ENCODE measurements at regions of chr10 and their contacts with region 1.

Region 1: DNA sequence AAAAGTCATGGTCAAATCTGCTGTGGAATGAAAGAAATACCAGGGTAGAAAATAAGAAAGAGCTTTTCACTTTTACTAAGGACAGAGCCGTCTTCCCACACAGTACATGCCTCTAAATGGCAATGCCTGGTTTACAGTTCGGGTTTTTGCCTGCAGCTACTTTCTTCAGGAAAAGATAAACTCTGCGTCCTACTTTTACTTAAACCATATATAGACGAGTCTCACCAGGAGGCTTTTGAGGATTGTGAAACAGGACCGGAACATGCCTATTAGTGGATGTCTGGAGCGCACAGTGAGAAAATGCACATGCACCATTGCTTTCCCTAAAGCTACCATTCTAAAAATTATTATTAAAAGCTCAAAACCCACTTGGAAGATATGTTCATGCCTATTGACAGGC is 70.5 kb downstream of the KLF6 start:
- DNase-seq: no peak
- ATAC-seq: no peak
- H3K4me3 ChIP-seq: no peak overlapping the region
- H3K27ac ChIP-seq: no peak overlapping the region
- H3K4me1 ChIP-seq: no peaks in the 10 kb centered on the region
- H3K27me3 ChIP-seq: peaks cover 2 to 33% of the 10 kb centered on the region in 2 experiments; a peak in 3 of 5 replicates
- CTCF ChIP-seq: no peak
- EP300 ChIP-seq: no peak
- POLR2A ChIP-seq: no peak
- RAD21 ChIP-seq: no peak

Region 2: GRCh38 chr10:3482200-3483138 is 232.1 kb before region 1 on chr10:
- CTCF ChIA-PET with region 1: no interaction called
- POLR2A ChIA-PET with region 1: no interaction called
- in situ Hi-C with region 1: no loop called
- intact Hi-C with region 1: no loop called
- DNase-seq: peak; percentile 30
- ATAC-seq: peak; percentile 48
- H3K4me3 ChIP-seq: no peak overlapping the region
- H3K27ac ChIP-seq: no peak overlapping the region
- H3K4me1 ChIP-seq: no peaks in the 10 kb centered on the region
- H3K27me3 ChIP-seq: peaks cover 4 to 48% of the 10 kb centered on the region in 2 experiments; a peak in 4 of 5 replicates
- CTCF ChIP-seq: no peak
- EP300 ChIP-seq: no peak
- POLR2A ChIP-seq: no peak
- RAD21 ChIP-seq: no peak

Region 3: GRCh38 chr10:3729397-3729976 is 15.0 kb after region 1 on chr10:
- CTCF ChIA-PET with region 1: no interaction called
- POLR2A ChIA-PET with region 1: no interaction called
- in situ Hi-C with region 1: no loop called
- intact Hi-C with region 1: no loop called
- DNase-seq: no peak
- ATAC-seq: no peak
- H3K4me3 ChIP-seq: no peak overlapping the region
- H3K27ac ChIP-seq: no peak overlapping the region
- H3K4me1 ChIP-seq: 0 out of 2 replicates have a peak, but pooled peaks cover 4% of the 10 kb centered on the region
- H3K27me3 ChIP-seq: peaks cover 0 to 10% of the 10 kb centered on the region in 2 experiments; a peak in 1 of 5 replicates
- CTCF ChIP-seq: no peak
- EP300 ChIP-seq: no peak
- POLR2A ChIP-seq: no peak
- RAD21 ChIP-seq: no peak

Region 4: DNA sequence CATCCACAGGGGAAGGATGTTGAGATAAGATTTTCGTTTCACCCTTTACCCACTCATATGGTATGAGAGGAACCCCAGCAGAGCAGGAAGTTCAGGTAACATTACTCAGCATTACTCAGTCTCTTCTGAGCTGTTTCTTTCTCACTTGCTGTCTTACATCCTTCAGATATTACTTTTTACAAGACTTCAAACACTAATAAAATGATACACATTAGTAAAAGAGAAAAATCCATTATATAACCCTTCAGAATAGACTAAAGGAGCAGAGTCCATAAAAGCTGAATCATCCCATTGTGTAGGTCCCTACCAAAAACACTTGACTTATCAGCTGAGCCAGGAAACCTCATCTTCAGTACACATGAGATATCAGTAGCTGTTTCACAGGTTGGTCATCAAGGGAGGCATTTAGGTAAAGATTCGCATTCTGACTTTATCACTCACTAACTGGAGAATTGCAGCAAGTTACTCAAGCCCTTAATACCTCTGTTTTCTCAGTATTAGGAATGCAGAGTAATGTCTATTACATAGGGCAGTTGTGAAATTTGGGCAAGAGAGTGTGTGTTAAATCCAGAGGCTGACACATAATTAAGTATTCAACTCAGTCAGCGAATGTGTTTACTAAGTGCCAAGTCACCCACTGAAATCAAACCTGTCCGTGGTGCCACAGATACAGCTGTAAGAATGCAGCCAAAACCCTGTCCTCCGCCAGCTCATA is 25.8 kb after region 1 on chr10:
- CTCF ChIA-PET with region 1: no interaction called
- POLR2A ChIA-PET with region 1: no interaction called
- in situ Hi-C with region 1: no loop called
- intact Hi-C with region 1: no loop called
- DNase-seq: peak; percentile 98
- ATAC-seq: peak; percentile 97
- H3K4me3 ChIP-seq: no peak overlapping the region
- H3K27ac ChIP-seq: peak overlapping the region; percentile 67
- H3K4me1 ChIP-seq: peaks cover 65% of the 10 kb centered on the region
- H3K27me3 ChIP-seq: no peaks in the 10 kb centered on the region
- CTCF ChIP-seq: no peak
- EP300 ChIP-seq: peak; percentile 11 to 91; a peak in 2 of 4 replicates
- POLR2A ChIP-seq: no peak
- RAD21 ChIP-seq: no peak

Region 5: GRCh38 chr10:4359003-4359402 is 644.5 kb after region 1 on chr10:
- CTCF ChIA-PET with region 1: no interaction called
- POLR2A ChIA-PET with region 1: no interaction called
- in situ Hi-C with region 1: no loop called
- intact Hi-C with region 1: loop called (anchors 5 kb)
- DNase-seq: no peak
- ATAC-seq: no peak
- H3K4me3 ChIP-seq: no peak overlapping the region
- H3K27ac ChIP-seq: no peak overlapping the region
- H3K4me1 ChIP-seq: no peaks in the 10 kb centered on the region
- H3K27me3 ChIP-seq: peaks cover 0 to 6% of the 10 kb centered on the region in 2 experiments; a peak in 1 of 5 replicates
- CTCF ChIP-seq: no peak
- EP300 ChIP-seq: no peak
- POLR2A ChIP-seq: no peak
- RAD21 ChIP-seq: no peak

Measured in HepG2 (cell line).